ENCODE measurements at regions of chr6 and their contacts with region 1.

Region 1: GRCh38 chr6:31901953-31902643 is at the start of gene ZBTB12:
- DNase-seq: peak; percentile 68 to 94 (median 84)
- ATAC-seq: peak; percentile 54
- H3K4me3 ChIP-seq: peak within 1 kb of the TSS; percentile 70 to 97
- H3K4me3 Mint-ChIP-seq: peak within 1 kb of the TSS; percentile 89
- H3K27ac ChIP-seq: peak within 1 kb of the TSS; percentile 47 to 76
- H3K27ac Mint-ChIP-seq: peak within 1 kb of the TSS; percentile 77
- H3K4me1 ChIP-seq: peaks cover 30% of the 10 kb centered on the region
- H3K4me1 Mint-ChIP-seq: peaks cover 32% of the 10 kb centered on the region
- H3K27me3 ChIP-seq: no peaks in the 10 kb centered on the region
- H3K27me3 Mint-ChIP-seq: no peaks in the 10 kb centered on the region
- CTCF ChIP-seq: no peak
- total RNA-seq, gene ZBTB12: 0.27 TPM in 1 of 2 experiments, not detected in the other

Region 2: DNA sequence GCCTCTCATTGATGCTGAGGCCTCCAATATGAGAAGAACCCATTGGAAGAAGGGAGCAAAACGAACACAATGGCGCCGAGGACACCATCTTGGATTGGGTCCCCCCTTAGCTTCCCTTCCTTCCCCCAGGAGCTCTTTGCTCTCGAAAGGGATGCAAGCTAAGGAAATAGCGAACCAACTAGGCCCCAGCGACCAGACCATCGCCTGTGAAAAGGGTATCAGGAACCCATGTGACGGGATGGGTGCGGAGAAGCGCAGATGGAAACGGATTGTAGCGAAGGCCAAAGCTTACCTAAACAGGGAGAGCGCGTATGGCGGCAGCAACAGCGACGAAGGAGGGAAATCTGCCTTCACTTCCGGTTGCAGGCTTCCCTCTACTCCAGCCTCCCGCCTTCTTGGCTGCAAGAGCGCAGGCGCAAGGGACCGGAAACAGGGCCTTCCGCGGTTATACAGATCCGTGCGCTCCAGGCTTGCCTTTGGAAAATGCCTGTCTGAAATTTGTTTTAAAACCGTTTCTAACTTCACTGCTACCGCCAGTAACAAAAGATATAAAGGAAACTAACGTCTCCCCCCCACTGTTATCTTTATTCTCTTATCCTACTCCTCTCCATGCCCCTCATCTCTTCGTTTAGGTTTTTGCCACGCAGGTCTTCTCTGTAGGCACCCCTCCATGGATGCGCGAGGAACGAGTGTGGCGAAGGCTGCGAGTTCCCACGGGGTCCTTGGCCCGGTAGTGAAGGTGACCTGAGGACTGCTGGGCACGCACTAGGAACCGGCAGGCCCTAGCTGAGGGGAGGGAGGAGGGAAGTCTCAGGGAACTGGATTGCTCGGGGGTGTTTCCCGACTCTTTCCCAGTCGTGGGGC is 360.2 kb before region 1 on chr6 and contains the start of gene DDX39B:
- CTCF ChIA-PET with region 1: no interaction called
- POLR2A ChIA-PET with region 1: interaction called, 11 read pairs
- intact Hi-C with region 1: loop called (anchors 2 to 5 kb)
- DNase-seq: peak; percentile 85 to 98 (median 93)
- ATAC-seq: peak; percentile 67
- H3K4me3 ChIP-seq: peak within 1 kb of the TSS; percentile 76 to 86
- H3K4me3 Mint-ChIP-seq: peak within 1 kb of the TSS; percentile 98
- H3K27ac ChIP-seq: peak within 1 kb of the TSS; percentile 95 to 96
- H3K27ac Mint-ChIP-seq: peak within 1 kb of the TSS; percentile 100
- H3K4me1 ChIP-seq: peaks cover 37% of the 10 kb centered on the region
- H3K4me1 Mint-ChIP-seq: peaks cover 56% of the 10 kb centered on the region
- H3K27me3 ChIP-seq: no peaks in the 10 kb centered on the region
- H3K27me3 Mint-ChIP-seq: no peaks in the 10 kb centered on the region
- CTCF ChIP-seq: no peak
- total RNA-seq, gene DDX39B: 483 to 518 TPM

Region 3: DNA sequence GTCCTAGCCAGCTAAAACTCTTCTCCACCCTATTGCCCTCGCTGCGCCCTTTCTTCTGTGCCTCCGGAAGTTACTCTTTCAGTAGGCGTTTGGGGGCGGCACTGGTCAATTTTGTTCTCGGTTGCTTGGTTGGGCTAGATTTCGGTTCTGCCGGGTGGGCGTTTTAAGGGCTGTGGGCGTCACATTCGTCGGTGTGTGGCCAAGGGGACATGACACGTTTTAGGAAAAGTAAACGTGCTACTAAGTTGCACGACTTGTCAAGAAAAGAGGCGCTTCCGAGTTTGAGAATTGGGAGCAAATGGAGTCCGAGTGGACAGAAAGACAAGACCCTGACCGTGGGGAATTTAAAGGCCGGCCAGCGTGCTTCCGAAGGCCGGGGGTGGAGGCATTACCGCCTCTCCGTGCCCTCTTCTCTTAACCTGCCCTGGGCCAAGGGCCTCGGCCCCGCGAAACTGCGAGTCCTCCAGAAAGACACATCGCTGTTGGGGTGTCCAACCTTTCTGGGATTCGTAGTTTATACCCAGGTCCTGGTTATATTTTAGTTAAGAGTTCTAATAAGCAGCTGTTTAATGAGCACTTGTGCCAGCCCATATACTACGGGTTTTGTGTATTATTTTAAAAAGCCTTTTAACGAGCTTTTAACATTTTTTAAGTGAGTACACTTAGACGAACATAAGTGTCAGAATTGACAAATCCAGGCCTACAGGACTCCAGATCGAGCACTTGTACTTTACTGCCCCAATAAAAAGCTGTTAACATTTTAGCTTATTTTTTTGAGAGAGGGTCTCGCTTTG is 249.0 kb before region 1 on chr6:
- CTCF ChIA-PET with region 1: no interaction called
- POLR2A ChIA-PET with region 1: interaction called, 10 read pairs
- intact Hi-C with region 1: loop called (anchors 1 kb)
- DNase-seq: peak in 4 of 9 experiments; percentile 77 to 92 (median 88)
- ATAC-seq: peak; percentile 70
- H3K4me3 ChIP-seq: peak overlapping the region; percentile 78 to 82
- H3K4me3 Mint-ChIP-seq: peak overlapping the region; percentile 92
- H3K27ac ChIP-seq: peak overlapping the region; percentile 94 to 96
- H3K27ac Mint-ChIP-seq: peak overlapping the region; percentile 100
- H3K4me1 ChIP-seq: peaks cover 32% of the 10 kb centered on the region
- H3K4me1 Mint-ChIP-seq: peaks cover 59% of the 10 kb centered on the region
- H3K27me3 ChIP-seq: no peaks in the 10 kb centered on the region
- H3K27me3 Mint-ChIP-seq: no peaks in the 10 kb centered on the region
- CTCF ChIP-seq: no peak

Region 4: DNA sequence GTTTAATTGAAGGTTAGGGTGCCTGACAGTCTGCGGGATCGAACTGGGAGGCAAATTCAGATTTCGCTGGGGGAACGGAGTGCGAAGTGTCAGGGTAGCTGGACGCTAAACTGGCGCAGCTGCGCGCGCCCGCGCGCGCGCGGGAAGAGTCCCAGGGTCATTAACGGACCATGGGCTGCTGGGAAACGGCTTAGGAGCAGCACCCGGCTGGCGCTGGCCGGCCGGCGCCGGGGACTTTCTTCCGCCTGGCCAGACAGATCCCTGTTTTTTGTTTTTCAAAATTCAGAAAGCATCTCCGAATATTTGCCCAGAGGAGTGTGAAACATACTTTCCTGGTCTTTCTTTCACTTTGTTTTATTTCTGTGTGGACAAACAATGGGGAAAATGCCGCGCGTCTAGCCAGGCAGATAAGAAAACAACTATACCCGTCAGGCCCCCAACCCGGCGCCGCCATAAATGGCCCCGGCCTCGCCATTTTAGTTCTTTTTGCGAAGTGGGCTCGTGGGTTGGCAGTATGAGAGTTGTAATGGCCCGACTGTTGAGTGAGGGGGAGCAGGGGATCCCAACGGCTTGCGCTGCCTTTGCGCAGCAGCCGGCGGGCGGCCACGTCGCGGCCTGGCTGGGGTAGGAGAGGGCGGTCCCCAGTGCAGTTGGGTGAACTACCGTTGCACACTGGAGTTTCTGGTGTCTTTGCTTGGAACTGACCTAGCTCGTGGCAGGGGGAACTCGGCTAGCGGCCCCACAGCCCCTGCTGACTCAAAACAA is 67.5 kb before region 1 on chr6:
- CTCF ChIA-PET with region 1: no interaction called
- POLR2A ChIA-PET with region 1: interaction called, 5 read pairs
- intact Hi-C with region 1: loop called (anchors 2 kb)
- DNase-seq: peak; percentile 70 to 89 (median 81)
- ATAC-seq: peak; percentile 75
- H3K4me3 ChIP-seq: peak overlapping the region; percentile 84 to 97
- H3K4me3 Mint-ChIP-seq: peak overlapping the region; percentile 98
- H3K27ac ChIP-seq: peak overlapping the region; percentile 93 to 99
- H3K27ac Mint-ChIP-seq: peak overlapping the region; percentile 99
- H3K4me1 ChIP-seq: peaks cover 42% of the 10 kb centered on the region
- H3K4me1 Mint-ChIP-seq: peaks cover 59% of the 10 kb centered on the region
- H3K27me3 ChIP-seq: no peaks in the 10 kb centered on the region
- H3K27me3 Mint-ChIP-seq: no peaks in the 10 kb centered on the region
- CTCF ChIP-seq: no peak

Region 5: DNA sequence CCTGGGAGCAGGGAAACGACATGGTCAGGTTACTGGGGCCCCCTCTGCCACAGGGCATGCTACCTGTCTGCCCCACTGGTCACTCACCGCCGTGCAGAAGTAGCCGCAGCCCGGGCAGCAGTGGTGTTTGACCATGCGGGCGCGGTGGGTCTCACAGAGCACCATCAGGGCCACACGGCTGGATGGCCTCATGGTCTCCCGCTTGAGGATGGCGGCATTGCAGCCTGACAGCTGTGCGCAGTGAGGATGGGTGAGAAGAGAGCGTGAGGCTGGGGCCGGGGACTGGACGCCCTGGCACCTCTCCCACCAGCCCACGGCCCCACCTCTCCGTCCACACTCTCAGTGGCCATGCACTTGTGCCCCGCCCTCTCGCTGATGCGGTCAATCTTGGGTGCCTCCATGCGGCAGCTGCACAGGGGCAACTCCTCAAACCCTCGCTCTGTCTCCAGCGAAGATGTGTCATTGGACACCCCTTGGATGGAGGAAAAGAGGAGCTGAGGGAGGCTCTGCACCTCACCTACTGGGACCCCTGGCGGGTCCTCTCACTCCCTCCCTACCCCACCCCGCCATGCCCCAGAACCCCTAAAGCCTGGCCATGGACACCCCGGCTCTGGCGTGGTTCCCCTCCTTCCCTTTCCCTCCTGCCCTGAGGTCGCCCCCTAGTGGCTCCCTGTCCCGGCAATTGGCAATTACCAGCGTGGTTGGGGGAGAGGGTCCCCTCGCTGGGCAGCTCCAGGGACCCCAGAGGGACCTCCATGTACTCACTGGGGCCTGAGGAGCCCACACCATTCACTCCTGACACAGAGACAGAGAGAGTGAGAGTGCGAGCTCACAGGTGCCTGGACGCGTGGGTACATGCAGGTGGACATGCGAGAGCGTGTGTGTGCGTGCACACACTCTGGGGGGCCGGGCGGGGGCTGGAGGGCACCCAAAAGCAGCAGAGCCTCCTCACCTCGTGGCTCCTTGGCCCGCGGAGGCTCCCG is 13.5 kb before region 1 on chr6:
- CTCF ChIA-PET with region 1: interaction called, 17 read pairs
- POLR2A ChIA-PET with region 1: interaction called, 10 read pairs
- intact Hi-C with region 1: no loop called
- DNase-seq: peak in 8 of 9 experiments; percentile 40 to 70 (median 62)
- ATAC-seq: peak; percentile 44
- H3K4me3 ChIP-seq: no peak overlapping the region
- H3K4me3 Mint-ChIP-seq: no peak overlapping the region
- H3K27ac ChIP-seq: no peak overlapping the region
- H3K27ac Mint-ChIP-seq: no peak overlapping the region
- H3K4me1 ChIP-seq: no peaks in the 10 kb centered on the region
- H3K4me1 Mint-ChIP-seq: peaks cover 3% of the 10 kb centered on the region
- H3K27me3 ChIP-seq: no peaks in the 10 kb centered on the region
- H3K27me3 Mint-ChIP-seq: no peaks in the 10 kb centered on the region
- CTCF ChIP-seq: peak; percentile 77

Region 6: GRCh38 chr6:32190054-32190851 is 288.2 kb after region 1 on chr6 and contains the start of gene PBX2:
- CTCF ChIA-PET with region 1: no interaction called
- POLR2A ChIA-PET with region 1: no interaction called
- intact Hi-C with region 1: loop called (anchors 5 kb)
- DNase-seq: peak; percentile 52 to 93 (median 86)
- ATAC-seq: peak; percentile 52
- H3K4me3 ChIP-seq: peak within 1 kb of the TSS; percentile 78 to 82
- H3K4me3 Mint-ChIP-seq: peak within 1 kb of the TSS; percentile 99
- H3K27ac ChIP-seq: peak within 1 kb of the TSS; percentile 73 to 97
- H3K27ac Mint-ChIP-seq: peak within 1 kb of the TSS; percentile 97
- H3K4me1 ChIP-seq: peaks cover 59% of the 10 kb centered on the region
- H3K4me1 Mint-ChIP-seq: peaks cover 64% of the 10 kb centered on the region
- H3K27me3 ChIP-seq: no peaks in the 10 kb centered on the region
- H3K27me3 Mint-ChIP-seq: no peaks in the 10 kb centered on the region
- CTCF ChIP-seq: no peak
- total RNA-seq, gene PBX2: 53.3 to 54.4 TPM